ENCODE measurements at regions of chr7 and their contacts with region 1.

Region 1: GRCh38 chr7:30983042-30983913 is 19.5 kb downstream of the GHRHR start:
- DNase-seq: peak; percentile 85
- CTCF ChIP-seq: peak; percentile 99

Region 2: GRCh38 chr7:30396389-30396788 is 586.9 kb before region 1 on chr7:
- CTCF ChIA-PET with region 1: no interaction called
- POLR2A ChIA-PET with region 1: no interaction called
- DNase-seq: no peak
- CTCF ChIP-seq: no peak

Region 3: GRCh38 chr7:30750683-30751650 is 232.3 kb before region 1 on chr7:
- CTCF ChIA-PET with region 1: no interaction called
- POLR2A ChIA-PET with region 1: no interaction called
- DNase-seq: no peak
- CTCF ChIP-seq: no peak

Region 4: DNA sequence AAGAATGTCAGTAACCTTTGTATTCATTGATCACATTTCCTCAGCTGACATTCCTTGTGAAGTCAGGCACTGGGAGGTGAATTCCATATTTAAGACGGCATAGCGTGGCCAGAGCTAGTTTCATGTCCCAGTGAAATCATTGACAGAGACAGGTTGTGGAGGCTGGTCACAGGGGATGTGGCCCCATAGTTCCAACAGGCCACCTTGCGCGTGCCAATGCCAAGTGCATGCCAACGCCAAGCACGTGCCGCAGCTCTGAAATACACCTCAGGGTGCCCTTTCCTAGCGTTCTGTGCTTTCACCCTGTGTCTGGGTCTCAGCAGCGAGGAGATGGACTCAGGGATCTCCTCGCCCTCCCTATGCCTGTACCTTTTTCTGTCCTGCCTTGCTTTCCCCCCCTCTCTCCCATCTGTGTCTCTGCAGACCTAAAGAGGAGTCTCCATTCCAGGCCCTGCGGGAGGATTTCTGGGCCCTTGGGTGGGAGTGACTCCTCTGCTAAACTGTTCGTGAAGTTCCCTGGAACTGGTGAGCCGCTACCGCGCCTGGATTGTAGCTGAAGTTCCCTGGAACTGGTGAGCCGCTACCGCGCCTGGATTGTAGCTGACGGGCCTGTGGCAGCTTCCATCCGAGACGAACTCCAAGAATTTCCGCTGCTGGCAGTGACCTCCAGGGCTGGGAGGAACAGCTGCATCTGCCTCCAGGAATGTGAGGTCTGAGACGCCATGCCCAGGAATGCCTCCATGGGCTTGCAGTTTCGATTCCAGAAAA is 51.9 kb before region 1 on chr7:
- CTCF ChIA-PET with region 1: interaction called, 21 read pairs
- POLR2A ChIA-PET with region 1: interaction called, 3 read pairs
- DNase-seq: peak; percentile 6
- CTCF ChIP-seq: no peak

Region 5: GRCh38 chr7:30968294-30968693 is 15.0 kb before region 1 on chr7:
- CTCF ChIA-PET with region 1: interaction called, 63 read pairs
- POLR2A ChIA-PET with region 1: no interaction called
- DNase-seq: peak; percentile 13
- CTCF ChIP-seq: no peak

Region 6: GRCh38 chr7:31002256-31002655 is 19.0 kb after region 1 on chr7:
- CTCF ChIA-PET with region 1: interaction called, 15 read pairs
- POLR2A ChIA-PET with region 1: no interaction called
- DNase-seq: no peak
- CTCF ChIP-seq: no peak

Region 7: GRCh38 chr7:31122649-31123058 is 139.4 kb after region 1 on chr7:
- CTCF ChIA-PET with region 1: interaction called, 219 read pairs
- POLR2A ChIA-PET with region 1: no interaction called
- DNase-seq: peak; percentile 54
- CTCF ChIP-seq: peak; percentile 78

Region 8: GRCh38 chr7:31134246-31135188 is 151.2 kb after region 1 on chr7:
- CTCF ChIA-PET with region 1: interaction called, 11 read pairs
- POLR2A ChIA-PET with region 1: no interaction called
- DNase-seq: peak; percentile 75
- CTCF ChIP-seq: peak; percentile 71